Dorsolateral prefrontal cortex (tissue), 120 donors: ENCODE measurements at regions of chrX and their contacts with region 1.

Region 1: GRCh38 chrX:107776649-107777535 is 641 bp upstream of the NCBP2L start:
- DNase-seq: peak; percentile 47 to 91 (median 80)
- H3K4me3 ChIP-seq: peak overlapping the region in 58 of 59 donors; percentile 35 to 76 (median 62)
- H3K27ac ChIP-seq: peak overlapping the region in 49 of 59 donors; percentile 32 to 87 (median 79)
- H3K27me3 ChIP-seq: peaks cover 0 to 76% (median 19%) of the 10 kb centered on the region in 45 donors
- CTCF ChIP-seq: peak; percentile 37 to 89 (median 82)

Region 2: GRCh38 chrX:107654872-107655761 is 121.8 kb before region 1 on chrX:
- intact Hi-C with region 1: loop called (anchors 2 to 5 kb)
- DNase-seq: peak in 1 of 10 donors; percentile 32
- H3K4me3 ChIP-seq: no peak overlapping the region
- H3K27ac ChIP-seq: no peak overlapping the region
- H3K27me3 ChIP-seq: peaks cover 0 to 83% (median 29%) of the 10 kb centered on the region in 45 donors
- CTCF ChIP-seq: peak in 54 of 56 donors; percentile 14 to 67 (median 57)

Region 3: DNA sequence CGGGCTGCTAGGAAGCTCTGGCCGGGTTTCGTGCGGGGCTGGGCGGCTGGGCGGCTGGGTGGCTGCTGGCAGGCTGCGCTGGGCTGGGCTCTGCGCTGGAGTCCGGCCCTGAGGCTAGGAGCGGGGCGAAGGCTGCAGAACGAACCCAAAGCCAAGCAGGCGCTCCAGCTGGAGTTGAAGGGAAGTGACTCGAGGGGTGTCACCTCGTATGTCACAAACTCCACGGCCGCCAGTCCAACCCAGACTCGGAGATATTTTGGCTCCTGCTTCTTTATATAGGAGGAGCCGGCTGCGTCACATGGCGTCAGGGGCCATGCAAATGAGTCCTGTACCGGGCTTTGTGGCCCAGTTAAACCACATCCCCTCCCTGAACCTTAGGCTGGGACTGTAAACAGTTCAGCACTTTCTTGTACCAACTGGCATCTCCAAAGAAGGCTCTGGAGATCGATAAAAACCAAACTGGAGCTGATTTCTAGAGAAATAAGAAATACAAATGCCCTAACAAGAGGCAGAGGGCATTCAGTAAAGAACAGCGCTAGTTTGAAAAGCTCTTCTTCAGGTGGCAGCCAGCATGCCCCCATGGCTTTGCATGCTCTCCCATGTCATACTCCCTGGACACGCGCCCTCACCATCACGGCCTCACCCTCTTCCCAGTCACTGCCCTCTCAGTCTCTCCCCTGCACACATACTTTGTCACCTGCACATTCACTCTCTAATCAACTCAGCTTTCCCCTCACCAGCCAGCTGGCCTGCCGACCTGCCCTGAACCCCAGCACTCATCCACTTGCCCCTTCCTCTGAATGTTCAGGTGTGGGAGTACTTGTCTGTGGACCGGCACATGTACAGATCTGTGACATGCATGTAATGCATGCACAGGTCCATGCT is 59.8 kb before region 1 on chrX:
- intact Hi-C with region 1: loop called (anchors 2 kb)
- DNase-seq: peak; percentile 57 to 86 (median 83)
- H3K4me3 ChIP-seq: peak overlapping the region; percentile 52 to 80 (median 69)
- H3K27ac ChIP-seq: peak overlapping the region; percentile 76 to 98 (median 91)
- H3K27me3 ChIP-seq: peaks cover 0 to 91% (median 38%) of the 10 kb centered on the region in 45 donors
- CTCF ChIP-seq: peak in 1 of 56 donors; percentile 15

Region 4: DNA sequence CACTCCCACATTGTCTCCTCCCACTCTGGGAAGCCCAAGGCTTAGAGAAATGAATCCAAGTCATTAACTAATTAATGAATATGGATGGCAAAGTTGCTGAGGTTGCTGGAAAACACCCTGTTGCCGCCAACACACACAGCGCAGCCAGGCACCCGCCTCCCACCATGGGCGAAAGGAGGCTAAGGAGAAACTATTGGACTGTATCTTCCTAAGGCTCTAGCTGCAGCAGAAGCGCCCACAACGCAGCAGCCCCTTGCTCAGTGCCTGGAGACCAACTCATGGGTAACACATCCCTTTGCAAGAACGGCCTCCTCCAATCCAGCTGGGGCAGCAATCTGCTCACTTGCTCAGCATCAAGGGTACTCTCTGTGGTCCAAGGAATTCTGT is 35.5 kb before region 1 on chrX:
- intact Hi-C with region 1: loop called (anchors 2 to 5 kb)
- DNase-seq: peak in 2 of 10 donors; percentile 37 to 51
- H3K4me3 ChIP-seq: peak overlapping the region in 33 of 59 donors; percentile 1 to 41 (median 22)
- H3K27ac ChIP-seq: peak overlapping the region; percentile 61 to 98 (median 95)
- H3K27me3 ChIP-seq: peaks cover 0 to 93% (median 19%) of the 10 kb centered on the region in 45 donors
- CTCF ChIP-seq: no peak